Activated CD8-positive, alpha-beta T cell treated with anti-CD3 and anti-CD28 coated beads for 36 hours (primary cell): ENCODE measurements at regions of chr10 and their contacts with region 1.

Region 1: DNA sequence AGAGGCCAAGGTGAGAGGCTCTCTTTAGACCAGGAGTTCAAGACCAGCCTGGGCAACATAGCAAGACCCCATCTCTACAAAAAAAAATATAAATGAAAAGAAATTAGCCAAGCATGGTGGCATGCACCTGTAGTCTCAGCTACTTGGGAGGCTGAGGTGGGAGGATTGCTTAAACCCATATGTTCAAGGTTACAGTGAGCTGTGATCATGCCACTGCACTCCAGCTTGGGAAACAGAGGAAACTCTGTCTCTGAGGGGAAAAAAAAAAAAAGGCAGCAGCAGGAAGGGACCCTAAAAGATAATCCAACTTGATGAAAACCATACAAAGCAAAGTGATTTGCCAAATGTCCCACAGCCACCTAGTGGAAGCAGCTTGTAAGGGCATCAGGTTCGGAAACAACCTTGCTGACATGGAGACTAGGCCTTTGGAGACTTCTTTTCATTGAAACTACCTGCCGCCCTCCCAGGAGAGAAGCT is 15.6 kb upstream of the PBLD start:
- DNase-seq: peak; percentile 57
- ATAC-seq: peak; percentile 85
- H3K4me3 Mint-ChIP-seq: no peak overlapping the region
- H3K27ac Mint-ChIP-seq: peak overlapping the region; percentile 75
- H3K4me1 Mint-ChIP-seq: peaks cover 10% of the 10 kb centered on the region
- H3K27me3 Mint-ChIP-seq: no peaks in the 10 kb centered on the region
- CTCF ChIP-seq: peak; percentile 71

Region 2: DNA sequence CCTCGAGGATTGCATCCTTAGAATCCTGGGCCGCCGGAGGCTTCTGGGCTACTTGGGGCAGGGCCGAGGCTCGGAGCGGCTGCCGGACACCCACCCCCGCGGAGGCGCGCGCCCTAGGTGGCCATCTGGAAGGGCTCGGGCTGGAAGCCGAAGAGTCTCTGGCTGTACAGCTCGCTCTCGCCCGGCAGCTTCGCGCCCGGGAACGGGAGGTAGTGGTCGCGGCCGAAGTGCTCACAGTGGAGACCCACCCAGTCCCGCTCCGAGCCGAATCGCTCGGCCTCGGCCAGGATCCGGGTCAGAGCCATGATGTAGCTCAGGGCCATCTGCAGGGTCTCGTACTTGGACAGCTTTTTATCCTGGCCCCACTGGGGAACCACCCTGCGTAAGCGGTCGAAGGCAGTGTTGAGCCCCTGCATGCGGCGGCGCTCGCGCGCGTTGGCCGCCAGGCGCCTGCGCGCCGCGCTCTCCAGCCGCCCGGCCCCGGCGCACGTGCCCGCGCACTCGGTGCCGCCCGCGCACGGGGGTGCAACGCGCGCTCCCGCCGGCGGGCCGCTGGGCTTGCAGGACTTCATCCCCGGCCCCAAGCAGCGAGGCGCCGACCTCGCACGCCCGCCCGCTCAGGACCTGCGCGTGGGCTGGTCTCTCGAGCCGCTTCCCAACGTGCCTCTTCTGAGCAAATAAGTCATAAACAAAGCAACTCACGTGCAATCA is 117.0 kb before region 1 on chr10:
- CTCF ChIA-PET with region 1: interaction called, 7 read pairs
- POLR2A ChIA-PET with region 1: no interaction called
- intact Hi-C with region 1: loop called (anchors 5 kb)
- DNase-seq: peak; percentile 54
- ATAC-seq: peak; percentile 93
- H3K4me3 Mint-ChIP-seq: peak overlapping the region; percentile 73
- H3K27ac Mint-ChIP-seq: no peak overlapping the region
- H3K4me1 Mint-ChIP-seq: peaks cover 7% of the 10 kb centered on the region
- H3K27me3 Mint-ChIP-seq: peaks cover 37% of the 10 kb centered on the region
- CTCF ChIP-seq: no peak

Region 3: GRCh38 chr10:68364101-68364886 is 16.0 kb after region 1 on chr10:
- CTCF ChIA-PET with region 1: interaction called, 16 read pairs
- POLR2A ChIA-PET with region 1: interaction called, 4 read pairs
- intact Hi-C with region 1: no loop called
- DNase-seq: no peak
- ATAC-seq: no peak
- H3K4me3 Mint-ChIP-seq: no peak overlapping the region
- H3K27ac Mint-ChIP-seq: peak overlapping the region; percentile 35
- H3K4me1 Mint-ChIP-seq: peaks cover 3% of the 10 kb centered on the region
- H3K27me3 Mint-ChIP-seq: no peaks in the 10 kb centered on the region
- CTCF ChIP-seq: no peak

Region 4: DNA sequence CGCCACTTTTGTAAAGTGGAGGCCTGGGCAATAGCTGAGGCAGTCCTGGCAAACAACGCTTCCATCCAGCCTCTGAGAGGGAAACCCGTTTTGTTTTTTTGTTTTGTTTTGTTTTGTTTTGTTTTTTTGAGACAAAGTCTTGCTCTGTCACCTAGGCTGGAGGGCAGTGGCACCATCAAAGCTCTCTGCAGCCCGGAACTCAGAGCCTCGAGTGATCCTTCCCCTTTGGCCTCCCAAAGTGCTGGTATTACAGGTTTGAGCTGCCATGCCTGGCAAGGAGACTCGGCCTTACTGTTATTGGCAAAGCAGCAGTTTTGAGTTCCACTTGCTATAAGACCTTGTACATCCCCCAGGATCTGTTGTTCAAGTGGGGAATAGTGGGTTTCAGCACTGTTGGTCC is 189.5 kb after region 1 on chr10:
- CTCF ChIA-PET with region 1: no interaction called
- POLR2A ChIA-PET with region 1: no interaction called
- intact Hi-C with region 1: no loop called
- DNase-seq: no peak
- ATAC-seq: no peak
- H3K4me3 Mint-ChIP-seq: no peak overlapping the region
- H3K27ac Mint-ChIP-seq: no peak overlapping the region
- H3K4me1 Mint-ChIP-seq: no peaks in the 10 kb centered on the region
- H3K27me3 Mint-ChIP-seq: no peaks in the 10 kb centered on the region
- CTCF ChIP-seq: no peak